Motor neuron (in vitro differentiated cells): ENCODE measurements at regions of chr5 and their contacts with region 1.

Region 1: GRCh38 chr5:171850324-171851285 is 65.0 kb downstream of the SMIM23 start:
- ATAC-seq: peak in 1 of 8 experiments; percentile 45
- H3K4me3 ChIP-seq: no peak overlapping the region
- H3K27ac ChIP-seq: no peak overlapping the region
- H3K4me1 ChIP-seq: peaks cover 6 to 8% of the 10 kb centered on the region in 2 donors

Region 2: DNA sequence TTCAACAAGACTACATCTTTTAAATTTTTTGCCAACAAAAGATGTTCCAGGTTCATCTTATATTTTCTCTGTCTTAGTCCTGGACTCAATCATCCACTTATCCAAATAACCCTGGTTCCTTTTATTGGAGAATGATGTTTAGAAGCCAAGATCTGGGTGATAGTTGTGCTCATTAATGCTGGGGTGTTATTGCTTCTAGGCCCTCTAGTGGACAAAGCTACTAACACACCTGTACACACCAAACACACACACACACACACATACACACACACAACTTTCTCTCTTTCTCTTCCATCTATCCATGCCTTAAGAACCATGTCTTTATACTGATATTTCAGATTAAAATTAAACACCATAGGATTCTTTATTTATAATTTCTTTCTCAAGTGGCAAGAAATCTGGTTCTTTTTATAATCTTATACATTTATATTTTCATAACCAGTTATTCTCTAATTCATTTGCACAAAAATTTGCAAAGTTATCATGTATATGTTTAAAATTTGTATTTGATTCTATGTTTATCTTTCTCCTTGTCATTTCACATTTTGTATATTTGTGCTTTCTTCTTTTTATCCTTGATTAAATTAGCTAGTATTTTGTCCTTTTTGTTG is 244.1 kb before region 1 on chr5:
- in situ Hi-C with region 1: loop called in 1 of 9 experiments (anchors 25 kb)
- ATAC-seq: no peak
- H3K4me3 ChIP-seq: no peak overlapping the region
- H3K27ac ChIP-seq: no peak overlapping the region
- H3K4me1 ChIP-seq: peaks cover 0 to under 1% of the 10 kb centered on the region in 2 donors